HEK293T (cell line): ENCODE measurements at regions of chr11 and their contacts with region 1.

Region 1: GRCh38 chr11:65615229-65615941 is at the start of gene PCNX3:
- DNase-seq: peak; percentile 100

Region 2: GRCh38 chr11:65569973-65570918 is 45.1 kb before region 1 on chr11 and contains the start of gene ZNRD2:
- CTCF ChIA-PET with region 1: no interaction called
- POLR2A ChIA-PET with region 1: interaction called, 19 read pairs
- DNase-seq: peak; percentile 96

Region 3: GRCh38 chr11:65593518-65594298 is 21.7 kb before region 1 on chr11:
- CTCF ChIA-PET with region 1: interaction called, 7 read pairs
- POLR2A ChIA-PET with region 1: interaction called, 16 read pairs
- DNase-seq: peak; percentile 57

Region 4: GRCh38 chr11:65604258-65604657 is 11.1 kb before region 1 on chr11:
- CTCF ChIA-PET with region 1: no interaction called
- POLR2A ChIA-PET with region 1: interaction called, 16 read pairs
- DNase-seq: no peak

Region 5: DNA sequence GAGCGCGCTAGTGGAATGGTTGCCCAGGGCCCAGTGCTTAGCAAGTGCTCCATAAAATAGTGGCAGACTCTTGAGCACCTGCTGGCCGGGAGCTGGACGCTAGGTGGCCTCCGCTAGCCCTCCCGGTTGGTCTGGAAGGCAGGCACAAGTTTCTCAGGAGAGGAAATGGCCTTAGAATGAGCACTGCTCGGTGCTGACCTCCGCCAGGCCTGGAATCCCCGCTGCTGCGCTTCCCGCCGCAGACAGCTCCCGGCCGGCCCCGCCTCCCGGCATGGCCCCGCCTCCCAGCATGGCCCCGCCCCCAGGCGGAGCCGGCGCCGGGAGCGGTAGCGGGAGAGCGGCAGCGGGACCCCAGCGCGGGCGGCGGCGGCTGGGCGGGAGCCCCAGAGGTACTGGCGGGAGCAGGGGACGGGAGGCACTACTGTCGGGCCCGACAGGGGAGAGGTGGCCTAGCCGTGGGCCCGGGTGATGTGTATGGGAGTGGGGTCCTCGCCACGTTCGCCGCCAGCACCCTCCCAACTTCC is 22.5 kb after region 1 on chr11 and contains the start of gene SIPA1:
- CTCF ChIA-PET with region 1: interaction called, 3 read pairs
- POLR2A ChIA-PET with region 1: interaction called, 15 read pairs
- DNase-seq: peak; percentile 94

Region 6: GRCh38 chr11:65652511-65653231 is 37.3 kb after region 1 on chr11:
- CTCF ChIA-PET with region 1: no interaction called
- POLR2A ChIA-PET with region 1: interaction called, 14 read pairs
- DNase-seq: peak; percentile 96

Region 7: GRCh38 chr11:65662799-65663638 is 47.6 kb after region 1 on chr11 and contains the start of gene RELA:
- CTCF ChIA-PET with region 1: no interaction called
- POLR2A ChIA-PET with region 1: interaction called, 14 read pairs
- DNase-seq: peak; percentile 96